Activated T-helper 1 cell treated with anti-CD3 and anti-CD28 coated beads, Interleukin-12 subunit alpha, Interleukin-12 subunit beta, Interleukin-2, Interleukin-4 antibody, amounts not matched to agents 30 ng/mL and 10 ng/mL and 1 ng/mL, durations not matched to agents 14 hours and 24 hours and 36 hours (primary cell): ENCODE measurements at regions of chr5 and their contacts with region 1.

Region 1: DNA sequence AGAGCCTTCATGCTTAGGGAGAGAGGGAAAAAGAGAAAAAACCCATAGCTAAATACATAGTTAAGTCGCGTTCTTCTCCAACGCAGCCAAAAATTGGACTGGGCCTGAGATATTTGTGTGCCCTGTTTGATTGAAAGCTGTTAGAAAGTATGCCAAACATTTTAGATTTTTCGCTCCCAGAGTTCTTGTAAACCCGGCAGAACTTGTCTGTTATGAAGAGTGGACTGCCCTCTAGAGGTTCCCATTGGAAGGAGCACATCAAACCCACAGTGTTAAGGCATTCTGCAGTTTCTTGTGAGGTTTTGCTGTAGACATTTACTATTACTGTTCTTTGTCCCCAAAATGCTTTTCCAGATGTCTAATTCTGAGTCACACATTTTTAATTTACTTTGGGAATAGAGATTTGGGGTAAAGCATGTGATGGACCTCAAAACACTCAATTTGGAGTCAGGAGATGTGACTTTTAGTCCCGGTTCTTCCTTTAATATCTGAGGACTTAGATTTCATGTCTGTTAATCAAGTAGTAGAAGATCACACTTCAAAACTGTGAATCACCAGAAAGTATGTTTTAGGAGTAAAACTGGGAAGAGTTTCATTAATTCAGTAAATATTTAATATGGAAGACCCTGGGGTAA is 96.6 kb downstream of the PCSK1 start:
- DNase-seq: peak; percentile 51
- H3K4me3 Mint-ChIP-seq: no peak overlapping the region
- H3K27ac Mint-ChIP-seq: no peak overlapping the region
- H3K4me1 Mint-ChIP-seq: peaks cover 10% of the 10 kb centered on the region
- H3K27me3 Mint-ChIP-seq: peaks cover 12% of the 10 kb centered on the region

Region 2: DNA sequence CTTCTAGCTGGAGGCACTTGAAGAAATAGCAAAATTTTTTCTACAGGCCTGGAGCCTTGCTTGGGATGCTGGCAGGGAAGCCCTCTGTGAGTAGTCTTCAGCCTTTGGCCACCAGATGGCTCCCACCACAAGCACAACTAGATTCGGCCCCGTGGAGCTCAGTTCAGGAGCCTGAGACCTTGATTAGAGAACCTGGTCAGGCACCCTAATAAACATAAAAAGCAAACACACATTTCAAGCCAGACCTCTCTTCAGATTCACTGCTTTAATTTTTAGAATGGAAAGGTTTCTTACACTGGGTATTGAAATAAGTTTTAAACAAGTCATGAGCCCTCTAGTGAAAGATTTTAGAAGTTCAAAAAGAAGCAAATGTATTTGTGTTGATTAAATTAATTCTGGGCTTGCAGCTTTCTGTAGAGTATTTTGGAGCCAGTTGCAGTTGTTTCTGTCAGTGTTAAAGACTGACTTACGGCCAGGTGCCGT is 555.3 kb before region 1 on chr5:
- intact Hi-C with region 1: loop called (anchors 2 kb)
- DNase-seq: peak; percentile 47
- H3K4me3 Mint-ChIP-seq: peak overlapping the region; percentile 56
- H3K27ac Mint-ChIP-seq: peak overlapping the region; percentile 29
- H3K4me1 Mint-ChIP-seq: peaks cover 22% of the 10 kb centered on the region
- H3K27me3 Mint-ChIP-seq: peaks cover 2% of the 10 kb centered on the region

Region 3: DNA sequence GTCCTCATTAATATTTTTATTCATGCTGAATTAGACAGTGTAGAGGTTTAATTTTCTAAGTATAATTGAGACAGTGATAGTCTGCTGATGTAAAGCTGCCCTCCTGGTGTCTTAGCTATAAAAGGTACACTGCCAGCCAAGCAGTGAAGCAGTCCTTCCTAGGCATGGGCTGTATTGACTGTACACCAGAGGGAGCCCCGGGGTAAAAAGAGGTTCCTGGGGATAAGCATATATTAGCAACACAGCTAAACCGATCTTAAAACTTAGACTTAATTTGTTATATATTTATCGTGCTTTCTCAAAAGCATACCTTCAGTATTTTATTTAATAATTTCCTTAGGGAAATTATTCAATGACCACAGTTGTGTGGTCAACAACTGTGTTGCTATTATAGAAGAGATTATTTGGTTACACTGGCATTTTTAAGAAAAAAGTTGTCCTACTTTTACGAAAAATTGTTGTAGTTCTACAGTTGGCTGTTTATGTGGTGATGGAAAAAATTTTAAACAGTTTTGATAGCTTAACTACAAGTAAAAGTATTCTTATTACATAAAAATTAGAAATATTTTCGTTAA is 443.6 kb before region 1 on chr5:
- intact Hi-C with region 1: loop called (anchors 1 kb)
- DNase-seq: peak; percentile 15
- H3K4me3 Mint-ChIP-seq: no peak overlapping the region
- H3K27ac Mint-ChIP-seq: no peak overlapping the region
- H3K4me1 Mint-ChIP-seq: peaks cover 25% of the 10 kb centered on the region
- H3K27me3 Mint-ChIP-seq: no peaks in the 10 kb centered on the region

Region 4: DNA sequence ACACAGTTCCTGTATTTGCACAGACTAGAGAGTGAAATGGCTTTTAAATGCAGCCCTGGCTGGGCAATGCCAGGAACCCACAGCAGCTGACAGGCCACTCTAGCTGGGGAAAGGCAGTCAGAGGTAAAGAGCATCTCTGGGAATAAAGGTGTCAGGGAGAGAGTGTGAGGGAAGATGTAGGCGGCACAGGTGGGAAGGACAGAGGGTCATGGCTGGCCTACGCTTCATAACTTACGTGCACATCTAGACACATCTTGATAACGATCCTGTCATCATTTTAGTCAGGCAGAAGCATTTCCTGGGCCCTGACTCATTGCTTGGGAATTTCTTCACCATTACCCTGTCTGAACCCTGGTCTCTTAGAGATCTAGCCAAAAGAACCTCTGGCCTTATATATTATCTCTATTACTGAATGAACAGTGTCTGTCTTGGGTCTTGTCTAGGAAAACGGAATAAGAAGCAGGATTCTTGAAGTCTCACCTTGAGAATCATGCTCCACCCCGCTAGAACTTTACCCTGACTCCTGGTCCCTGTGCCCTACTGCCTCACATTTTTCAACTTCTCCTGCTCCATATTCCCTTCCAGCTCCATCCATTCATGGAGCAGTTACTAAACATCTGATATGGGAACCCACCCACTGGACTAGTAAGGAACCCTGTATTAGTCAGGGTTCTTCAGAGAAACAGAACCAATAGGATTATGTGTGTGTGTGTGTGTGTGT is 268.4 kb before region 1 on chr5:
- intact Hi-C with region 1: loop called (anchors 5 kb)
- DNase-seq: no peak
- H3K4me3 Mint-ChIP-seq: no peak overlapping the region
- H3K27ac Mint-ChIP-seq: peak overlapping the region; percentile 79
- H3K4me1 Mint-ChIP-seq: peaks cover 68% of the 10 kb centered on the region
- H3K27me3 Mint-ChIP-seq: no peaks in the 10 kb centered on the region

Region 5: GRCh38 chr5:96113170-96113939 is 223.1 kb before region 1 on chr5:
- intact Hi-C with region 1: loop called (anchors 2 kb)
- DNase-seq: no peak
- H3K4me3 Mint-ChIP-seq: no peak overlapping the region
- H3K27ac Mint-ChIP-seq: peak overlapping the region; percentile 50
- H3K4me1 Mint-ChIP-seq: peaks cover 42% of the 10 kb centered on the region
- H3K27me3 Mint-ChIP-seq: no peaks in the 10 kb centered on the region

Region 6: GRCh38 chr5:96151891-96152290 is 184.6 kb before region 1 on chr5:
- intact Hi-C with region 1: loop called (anchors 10 kb)
- DNase-seq: no peak
- H3K4me3 Mint-ChIP-seq: no peak overlapping the region
- H3K27ac Mint-ChIP-seq: no peak overlapping the region
- H3K4me1 Mint-ChIP-seq: no peaks in the 10 kb centered on the region
- H3K27me3 Mint-ChIP-seq: peaks cover 2% of the 10 kb centered on the region

Region 7: DNA sequence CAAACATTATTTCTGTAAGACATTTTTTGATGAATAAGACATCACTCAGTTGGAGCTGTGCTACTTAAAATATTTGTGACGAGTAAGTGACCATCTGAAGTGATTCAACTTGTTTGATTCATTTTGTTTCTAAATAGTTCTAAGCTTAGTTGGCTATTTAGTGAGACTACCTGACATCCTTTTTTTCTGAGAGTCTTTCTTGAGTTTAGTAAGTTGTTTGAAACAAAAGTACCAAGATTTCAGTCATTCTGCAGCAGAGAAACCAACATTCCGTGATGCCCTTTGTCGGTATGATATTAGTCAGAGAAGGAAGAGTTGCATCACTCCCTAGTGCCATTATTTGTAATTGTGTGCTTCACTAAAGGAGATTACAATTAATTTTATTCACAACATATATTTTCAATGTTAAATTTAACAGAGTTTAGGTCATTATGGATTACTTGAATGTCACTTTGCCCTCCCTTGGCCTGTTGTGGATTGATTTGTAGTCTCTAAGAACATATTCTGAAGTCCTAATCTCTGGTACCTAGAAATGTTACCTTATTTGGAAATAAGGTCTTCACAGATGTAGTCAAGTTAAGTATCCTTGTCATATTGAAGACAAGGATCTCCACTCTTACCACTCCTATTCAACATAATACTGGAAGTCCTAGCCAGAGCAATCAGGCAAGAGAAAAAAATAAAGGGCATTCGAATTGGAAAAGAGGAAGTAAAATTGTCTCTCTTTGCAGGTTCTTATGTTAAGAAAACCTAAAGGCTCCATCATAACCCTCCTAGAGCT is 115.7 kb before region 1 on chr5:
- intact Hi-C with region 1: loop called (anchors 2 kb)
- DNase-seq: no peak
- H3K4me3 Mint-ChIP-seq: no peak overlapping the region
- H3K27ac Mint-ChIP-seq: peak overlapping the region; percentile 81
- H3K4me1 Mint-ChIP-seq: peaks cover 13% of the 10 kb centered on the region
- H3K27me3 Mint-ChIP-seq: peaks cover 1% of the 10 kb centered on the region